ENCODE measurements at regions of chr1 and their contacts with region 1.

Region 1: DNA sequence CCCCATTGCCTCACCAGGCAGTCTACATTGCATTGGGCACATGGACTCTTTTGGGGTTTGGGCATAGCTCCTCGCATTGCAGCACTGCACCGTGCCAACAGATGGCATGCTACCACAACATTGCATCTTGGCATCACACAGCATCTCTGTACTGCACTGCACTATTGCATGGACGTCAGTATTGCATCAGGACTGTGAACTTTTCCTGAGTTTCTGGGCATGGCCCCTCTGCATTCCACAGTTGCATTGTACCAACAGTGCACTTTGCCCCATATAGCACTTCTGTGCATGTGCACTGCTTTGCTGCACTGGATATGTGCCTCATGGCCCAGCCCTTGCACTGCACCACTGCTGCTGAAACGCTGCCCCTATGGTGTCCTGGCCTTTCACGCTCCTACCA is 9.6 kb downstream of the PTPRU start:
- DNase-seq: peak in 1 of 2 experiments; percentile 52
- ATAC-seq: peak; percentile 86 to 94
- H3K4me3 ChIP-seq: no peak overlapping the region
- H3K27ac ChIP-seq: no peak overlapping the region
- H3K4me1 ChIP-seq: 0 out of 3 replicates have a peak, but pooled peaks cover 4% of the 10 kb centered on the region
- CTCF ChIP-seq: peak; percentile 69
- EP300 ChIP-seq: no peak
- POLR2A ChIP-seq: no peak
- RAD21 ChIP-seq: peak; percentile 85 to 91

Region 2: DNA sequence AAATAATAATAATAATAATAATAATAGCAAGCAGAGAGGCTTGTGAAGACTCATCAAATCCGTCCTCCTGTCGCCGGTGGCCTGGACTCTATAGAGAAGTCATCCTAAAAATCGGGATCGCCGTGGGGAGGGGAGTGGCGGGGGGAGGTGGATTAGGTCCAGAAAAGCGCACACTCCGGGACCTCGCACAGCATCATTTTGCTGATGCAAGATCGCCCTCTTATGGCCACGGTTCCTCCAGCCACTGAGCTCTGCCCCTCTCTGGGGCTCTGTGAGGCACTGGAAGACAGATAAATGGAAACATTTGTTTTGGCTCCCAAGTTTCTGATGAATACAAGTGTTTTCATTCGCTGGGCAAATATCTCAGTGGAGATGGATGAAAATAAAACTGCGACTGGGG is 865.6 kb after region 1 on chr1:
- CTCF ChIA-PET with region 1: interaction called, 15 read pairs
- POLR2A ChIA-PET with region 1: no interaction called
- DNase-seq: peak; percentile 28 to 33
- ATAC-seq: peak; percentile 84 to 93; a peak in 4 of 6 replicates
- H3K4me3 ChIP-seq: no peak overlapping the region; the same call in 2 of the 3 replicates
- H3K27ac ChIP-seq: no peak overlapping the region
- H3K4me1 ChIP-seq: no peaks in the 10 kb centered on the region; the same call in 2 of the 3 replicates
- CTCF ChIP-seq: peak; percentile 51
- EP300 ChIP-seq: no peak
- POLR2A ChIP-seq: no peak
- RAD21 ChIP-seq: peak; percentile 75 to 77

Region 3: DNA sequence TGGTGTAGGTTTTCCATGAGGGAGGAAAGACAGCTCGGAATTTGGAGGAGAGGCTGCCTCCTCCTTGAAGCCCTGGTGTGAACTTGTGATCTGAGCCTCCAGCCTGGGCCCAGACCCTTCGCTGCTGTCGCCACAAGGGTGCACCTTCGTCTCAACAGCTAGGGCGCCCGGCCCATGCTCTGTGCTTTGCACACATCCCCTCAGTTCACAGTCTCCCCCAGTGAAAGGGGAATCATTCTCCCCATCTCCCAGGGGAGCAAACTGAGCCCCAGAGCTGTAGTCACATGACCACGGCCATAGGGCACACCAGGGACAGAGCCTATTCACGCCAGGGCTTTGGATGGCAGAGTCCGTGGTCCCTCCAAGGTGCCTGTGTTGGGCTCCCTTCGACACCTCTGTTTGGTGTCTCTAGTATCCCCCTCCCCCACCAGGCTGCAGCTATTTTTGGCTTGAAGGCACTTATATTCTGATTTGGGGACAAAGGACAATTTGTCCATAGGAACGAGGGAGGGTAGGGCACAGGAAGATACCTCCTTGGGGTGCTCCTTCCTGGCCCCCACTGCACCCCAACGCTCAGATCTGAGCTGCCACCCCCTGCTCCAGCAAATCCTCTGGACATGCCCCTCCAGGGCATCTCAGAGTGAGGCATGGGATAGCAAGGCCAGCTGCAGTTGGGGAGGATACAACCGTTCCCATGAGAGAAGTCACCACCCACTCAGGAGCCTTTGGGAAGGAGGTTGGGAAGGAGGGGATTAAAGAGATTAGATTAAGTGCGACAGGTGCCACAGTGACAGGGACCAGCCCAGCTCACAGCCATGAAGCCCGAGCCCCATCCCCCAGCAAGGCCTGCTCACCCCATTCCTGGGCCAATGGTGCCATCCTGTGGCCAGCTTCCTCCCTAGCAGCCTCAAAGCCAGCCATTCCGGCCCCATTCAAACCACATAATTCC is 1461.8 kb after region 1 on chr1:
- CTCF ChIA-PET with region 1: interaction called, 14 read pairs
- POLR2A ChIA-PET with region 1: no interaction called
- DNase-seq: peak; percentile 57 to 69
- ATAC-seq: peak; percentile 77 to 93
- H3K4me3 ChIP-seq: no peak overlapping the region
- H3K27ac ChIP-seq: no peak overlapping the region
- H3K4me1 ChIP-seq: 0 out of 3 replicates have a peak, but pooled peaks cover 3% of the 10 kb centered on the region
- CTCF ChIP-seq: peak; percentile 83
- EP300 ChIP-seq: no peak
- POLR2A ChIP-seq: no peak
- RAD21 ChIP-seq: peak; percentile 94 to 95